CD8-positive, alpha-beta memory T cell (primary cell): ENCODE measurements at regions of chr16 and their contacts with region 1.

Region 1: DNA sequence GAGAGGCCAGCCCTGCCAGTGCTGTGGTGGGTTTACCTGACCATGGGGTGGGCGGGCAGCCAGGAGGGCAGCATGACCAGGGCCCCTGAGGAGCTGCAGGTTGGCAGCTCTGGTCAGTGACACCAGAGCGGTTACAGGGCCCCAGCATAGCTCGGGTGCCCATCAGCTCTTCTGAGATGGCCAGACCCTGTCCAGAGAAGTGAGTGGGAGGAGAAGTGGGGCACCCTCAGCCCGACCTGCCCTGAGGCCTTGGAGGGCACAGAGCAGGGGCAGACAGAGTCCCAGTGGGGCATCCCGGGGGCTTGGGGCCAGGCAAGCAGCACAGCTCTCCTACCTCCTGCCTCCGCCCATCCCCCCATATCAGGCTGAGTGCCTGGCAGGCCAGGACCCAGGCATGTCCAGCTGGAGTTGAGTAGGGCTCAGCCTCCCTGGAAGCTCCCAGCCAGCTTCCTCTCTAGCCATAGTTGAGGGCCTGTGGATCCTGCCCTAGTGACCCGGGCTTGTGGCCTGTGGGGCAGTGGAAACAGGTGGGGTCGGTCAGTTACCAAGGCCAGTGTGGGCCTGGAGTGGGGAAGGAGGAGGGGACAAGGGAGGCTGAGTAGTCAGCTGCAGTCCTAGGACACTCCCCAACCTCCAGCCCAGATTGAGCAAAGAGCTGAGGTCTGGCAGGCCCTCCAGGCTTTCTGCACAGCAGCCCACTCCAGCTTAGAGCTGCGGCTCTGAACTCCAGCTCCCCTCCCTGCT is 83.5 kb downstream of the AMFR start:
- DNase-seq: no peak
- H3K4me3 ChIP-seq: no peak overlapping the region
- H3K4me3 Mint-ChIP-seq: no peak overlapping the region
- H3K27ac ChIP-seq: no peak overlapping the region
- H3K27ac Mint-ChIP-seq: no peak overlapping the region
- H3K4me1 ChIP-seq: no peaks in the 10 kb centered on the region
- H3K4me1 Mint-ChIP-seq: no peaks in the 10 kb centered on the region
- H3K27me3 ChIP-seq: no peaks in the 10 kb centered on the region
- H3K27me3 Mint-ChIP-seq: peaks cover 0 to 3% of the 10 kb centered on the region in 2 donors

Region 2: DNA sequence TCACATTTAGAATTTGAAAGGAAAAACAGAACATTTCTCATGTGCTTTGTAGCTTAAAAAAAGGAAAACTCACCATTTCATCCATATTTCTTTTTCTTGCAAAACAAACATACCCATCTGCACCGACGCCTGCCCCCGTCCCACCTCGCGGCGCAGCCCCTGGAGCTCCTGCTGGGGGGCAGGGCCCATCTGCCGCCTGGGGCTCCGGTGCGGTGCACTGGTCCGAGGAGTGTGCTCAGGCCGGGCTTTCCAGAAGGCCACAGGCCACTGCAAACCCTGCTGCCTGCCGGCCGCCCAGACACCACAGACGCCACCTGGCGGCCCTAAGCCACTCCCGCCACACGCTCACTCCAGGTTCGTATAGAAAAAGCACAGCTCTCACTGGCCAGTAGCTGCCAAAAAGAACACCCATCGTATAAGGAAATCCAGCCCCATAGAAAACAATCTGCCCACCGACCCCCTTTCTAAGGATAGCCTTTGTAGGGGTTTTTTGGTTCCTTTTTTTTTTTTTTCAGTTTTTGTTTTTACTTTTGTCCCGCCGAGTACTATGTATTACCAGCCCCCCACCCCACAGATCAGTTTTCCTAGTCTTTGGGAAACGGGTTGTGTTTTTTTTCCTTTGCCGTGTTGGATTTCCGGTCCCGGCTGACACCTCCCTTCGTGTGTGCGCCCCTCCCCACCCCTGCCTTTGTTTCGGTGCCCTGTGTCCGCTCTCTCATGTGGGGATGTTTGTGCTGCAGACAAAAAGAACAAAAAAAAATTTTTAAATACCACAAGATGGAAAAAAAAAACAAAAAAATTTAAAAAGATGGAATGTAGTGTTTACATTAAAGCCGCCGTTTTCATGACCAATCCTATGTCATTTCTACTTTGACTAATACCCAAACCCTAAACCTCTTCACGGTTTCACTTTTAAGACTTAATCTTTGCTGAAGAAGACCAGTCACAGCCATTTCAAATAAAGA is 14.7 kb after region 1 on chr16:
- CTCF ChIA-PET with region 1: interaction called, 11 read pairs
- POLR2A ChIA-PET with region 1: no interaction called
- DNase-seq: peak; percentile 31 to 62 (median 41)
- H3K4me3 ChIP-seq: peak overlapping the region; percentile 70
- H3K4me3 Mint-ChIP-seq: peak overlapping the region; percentile 76 to 95 (median 89)
- H3K27ac ChIP-seq: peak overlapping the region; percentile 31
- H3K27ac Mint-ChIP-seq: peak overlapping the region; percentile 71 to 97 (median 90)
- H3K4me1 ChIP-seq: no peaks in the 10 kb centered on the region
- H3K4me1 Mint-ChIP-seq: peaks cover 14 to 24% (median 17%) of the 10 kb centered on the region in 3 donors
- H3K27me3 ChIP-seq: no peaks in the 10 kb centered on the region
- H3K27me3 Mint-ChIP-seq: no peaks in the 10 kb centered on the region